CD8-positive, alpha-beta T cell (primary cell): ENCODE measurements at regions of chr16 and their contacts with region 1.

Region 1: GRCh38 chr16:15073101-15073500 is 17.2 kb upstream of the NTAN1 start:
- DNase-seq: no peak
- ATAC-seq: no peak
- H3K4me3 ChIP-seq: no peak overlapping the region
- H3K4me3 Mint-ChIP-seq: no peak overlapping the region
- H3K27ac ChIP-seq: no peak overlapping the region
- H3K27ac Mint-ChIP-seq: no peak overlapping the region
- H3K4me1 ChIP-seq: no peaks in the 10 kb centered on the region
- H3K4me1 Mint-ChIP-seq: no peaks in the 10 kb centered on the region
- H3K27me3 ChIP-seq: no peaks in the 10 kb centered on the region
- H3K27me3 Mint-ChIP-seq: no peaks in the 10 kb centered on the region
- CTCF ChIP-seq: no peak

Region 2: DNA sequence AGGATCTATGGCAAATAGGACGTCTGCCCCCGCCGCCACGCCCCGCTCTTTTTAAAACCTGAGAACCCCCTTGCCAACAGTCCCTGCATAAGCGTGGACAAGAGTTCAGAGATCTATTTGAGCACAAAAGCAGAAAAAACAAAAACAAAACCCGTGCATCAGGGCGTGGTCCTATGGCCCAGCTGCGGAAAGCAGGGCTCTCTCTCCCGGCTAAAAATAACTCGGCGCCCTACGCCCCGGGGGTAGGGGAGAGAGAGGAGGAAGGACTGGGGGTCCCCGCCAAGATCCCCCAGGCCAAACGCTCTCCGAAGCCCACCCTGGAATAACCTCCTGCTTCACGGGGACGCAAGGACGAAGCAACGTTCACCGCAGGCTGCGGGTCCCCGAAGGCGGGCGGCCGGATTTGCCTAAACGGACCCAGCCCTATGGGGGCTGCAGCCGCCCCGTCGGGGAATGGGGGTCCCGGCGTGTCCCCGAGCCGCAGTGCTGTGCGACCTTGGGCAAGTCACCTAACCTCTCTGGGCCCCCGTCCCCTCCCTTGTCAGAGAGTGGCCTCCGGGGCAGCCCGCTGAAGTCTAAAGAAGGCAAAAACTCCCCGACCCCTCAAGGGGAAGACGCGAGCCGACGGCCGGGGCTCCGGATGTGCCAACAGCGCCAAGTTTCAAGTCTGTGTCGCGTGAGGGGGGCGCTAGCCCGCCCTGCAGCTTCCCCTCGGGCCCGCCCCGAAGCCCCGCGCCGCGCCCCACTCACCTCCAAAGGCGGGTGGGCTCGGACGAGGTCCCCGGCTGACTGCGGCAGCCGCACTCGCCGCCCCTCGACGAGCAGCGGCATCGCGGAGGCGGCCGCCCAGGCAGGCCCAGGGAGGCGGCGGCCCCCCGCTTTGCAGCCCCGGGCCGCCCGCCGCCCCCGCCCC is 17.7 kb before region 1 on chr16:
- CTCF ChIA-PET with region 1: interaction called, 3 read pairs
- POLR2A ChIA-PET with region 1: interaction called, 3 read pairs
- intact Hi-C with region 1: loop called in 1 of 2 experiments (anchors 2 kb)
- DNase-seq: peak in 6 of 9 experiments; percentile 62 to 90 (median 82)
- ATAC-seq: peak; percentile 75
- H3K4me3 ChIP-seq: peak overlapping the region; percentile 86 to 94
- H3K4me3 Mint-ChIP-seq: peak overlapping the region; percentile 87
- H3K27ac ChIP-seq: peak overlapping the region; percentile 67 to 68
- H3K27ac Mint-ChIP-seq: peak overlapping the region; percentile 70
- H3K4me1 ChIP-seq: peaks cover 14% of the 10 kb centered on the region
- H3K4me1 Mint-ChIP-seq: peaks cover 16% of the 10 kb centered on the region
- H3K27me3 ChIP-seq: no peaks in the 10 kb centered on the region
- H3K27me3 Mint-ChIP-seq: no peaks in the 10 kb centered on the region
- CTCF ChIP-seq: peak; percentile 32

Region 3: DNA sequence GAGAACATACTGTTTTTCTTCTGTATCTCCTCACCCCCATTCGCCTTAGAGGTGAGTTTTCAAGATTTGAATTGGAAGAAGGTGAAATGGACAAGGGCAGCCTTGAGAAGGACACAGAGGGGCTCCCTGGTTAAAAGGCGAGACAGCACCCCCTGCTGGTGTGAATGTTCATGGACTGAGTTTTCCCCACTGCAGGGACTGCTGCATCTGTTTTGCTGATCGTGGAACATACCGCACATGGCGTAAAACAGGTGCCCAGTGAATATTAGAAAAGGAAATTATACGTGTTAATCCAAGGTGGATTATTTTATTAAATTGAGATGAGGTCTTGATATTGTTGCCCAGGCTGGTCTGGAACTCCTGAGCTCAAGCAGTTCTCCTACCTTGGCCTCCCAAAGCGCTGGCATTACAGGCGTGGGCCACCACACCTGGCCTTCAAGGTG is 631.5 kb after region 1 on chr16:
- CTCF ChIA-PET with region 1: no interaction called
- POLR2A ChIA-PET with region 1: no interaction called
- intact Hi-C with region 1: loop called in 1 of 2 experiments (anchors 10 kb)
- DNase-seq: peak; percentile 56 to 87 (median 73)
- ATAC-seq: peak; percentile 82
- H3K4me3 ChIP-seq: no peak overlapping the region
- H3K4me3 Mint-ChIP-seq: no peak overlapping the region
- H3K27ac ChIP-seq: no peak overlapping the region
- H3K27ac Mint-ChIP-seq: peak overlapping the region; percentile 22
- H3K4me1 ChIP-seq: no peaks in the 10 kb centered on the region
- H3K4me1 Mint-ChIP-seq: peaks cover 16% of the 10 kb centered on the region
- H3K27me3 ChIP-seq: no peaks in the 10 kb centered on the region
- H3K27me3 Mint-ChIP-seq: no peaks in the 10 kb centered on the region
- CTCF ChIP-seq: peak; percentile 88

Region 4: GRCh38 chr16:16109453-16110108 is 1036.5 kb after region 1 on chr16:
- CTCF ChIA-PET with region 1: no interaction called
- POLR2A ChIA-PET with region 1: no interaction called
- intact Hi-C with region 1: loop called in 1 of 2 experiments (anchors 10 kb)
- DNase-seq: no peak
- ATAC-seq: no peak
- H3K4me3 ChIP-seq: no peak overlapping the region
- H3K4me3 Mint-ChIP-seq: no peak overlapping the region
- H3K27ac ChIP-seq: no peak overlapping the region
- H3K27ac Mint-ChIP-seq: no peak overlapping the region
- H3K4me1 ChIP-seq: no peaks in the 10 kb centered on the region
- H3K4me1 Mint-ChIP-seq: no peaks in the 10 kb centered on the region
- H3K27me3 ChIP-seq: no peaks in the 10 kb centered on the region
- H3K27me3 Mint-ChIP-seq: no peaks in the 10 kb centered on the region
- CTCF ChIP-seq: no peak